Activated naive CD4-positive, alpha-beta T cell treated with anti-CD3 and anti-CD28 coated beads for 36 hours (primary cell): ENCODE measurements at regions of chr1 and their contacts with region 1.

Region 1: GRCh38 chr1:243802736-243803135 is 47.3 kb downstream of the AKT3 start:
- DNase-seq: no peak
- H3K4me3 Mint-ChIP-seq: no peak overlapping the region
- H3K27ac Mint-ChIP-seq: no peak overlapping the region
- H3K4me1 Mint-ChIP-seq: peaks cover 52% of the 10 kb centered on the region
- H3K27me3 Mint-ChIP-seq: no peaks in the 10 kb centered on the region

Region 2: GRCh38 chr1:243831463-243831862 is 28.7 kb after region 1 on chr1:
- CTCF ChIA-PET with region 1: no interaction called
- intact Hi-C with region 1: loop called (anchors 2 kb)
- DNase-seq: no peak
- H3K4me3 Mint-ChIP-seq: no peak overlapping the region
- H3K27ac Mint-ChIP-seq: no peak overlapping the region
- H3K4me1 Mint-ChIP-seq: peaks cover 35% of the 10 kb centered on the region
- H3K27me3 Mint-ChIP-seq: no peaks in the 10 kb centered on the region

Region 3: DNA sequence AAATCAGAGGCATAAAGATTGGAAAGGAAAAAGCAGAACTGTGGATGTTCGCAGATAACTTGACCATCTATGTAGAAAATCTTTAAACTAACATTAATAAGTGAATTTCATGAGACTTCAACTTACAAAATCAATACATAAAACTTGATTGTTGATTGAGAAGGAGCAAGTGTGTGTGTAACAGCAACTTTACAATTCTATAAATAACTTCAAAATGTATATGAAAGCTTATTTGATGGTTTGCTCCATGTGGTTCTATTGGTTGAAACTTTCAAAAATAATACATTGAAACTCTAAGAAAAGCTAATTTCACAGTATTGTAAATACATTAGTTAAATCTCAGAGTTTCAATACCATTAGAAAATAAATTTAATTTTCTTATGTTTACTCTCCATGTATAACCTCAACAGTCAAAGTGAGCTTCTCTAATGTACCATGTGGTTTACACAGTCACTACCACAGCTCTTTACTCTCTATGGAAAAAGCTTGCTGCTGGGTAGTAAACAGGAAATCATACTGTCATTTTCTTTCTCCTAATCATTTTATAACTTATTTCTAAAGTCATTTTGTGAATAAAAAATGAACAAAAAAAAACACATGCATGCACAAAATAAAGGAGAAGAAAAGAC is 35.3 kb after region 1 on chr1:
- CTCF ChIA-PET with region 1: no interaction called
- intact Hi-C with region 1: loop called (anchors 1 kb)
- DNase-seq: no peak
- H3K4me3 Mint-ChIP-seq: no peak overlapping the region
- H3K27ac Mint-ChIP-seq: no peak overlapping the region
- H3K4me1 Mint-ChIP-seq: peaks cover 30% of the 10 kb centered on the region
- H3K27me3 Mint-ChIP-seq: no peaks in the 10 kb centered on the region